ENCODE measurements at regions of chr1 and their contacts with region 1.

Region 1: GRCh38 chr1:163174524-163175437 is 27.9 kb downstream of the RGS5 start:
- DNase-seq: peak; percentile 73
- H3K4me3 Mint-ChIP-seq: peak overlapping the region; percentile 0
- H3K27ac Mint-ChIP-seq: no peak overlapping the region
- H3K4me1 Mint-ChIP-seq: peaks cover 19% of the 10 kb centered on the region
- H3K27me3 Mint-ChIP-seq: no peaks in the 10 kb centered on the region
- CTCF ChIP-seq: peak; percentile 95

Region 2: GRCh38 chr1:162878000-162878596 is 296.7 kb before region 1 on chr1:
- CTCF ChIA-PET with region 1: interaction called, 75 read pairs
- POLR2A ChIA-PET with region 1: no interaction called
- intact Hi-C with region 1: loop called (anchors 1 kb)
- DNase-seq: peak; percentile 87
- H3K4me3 Mint-ChIP-seq: no peak overlapping the region
- H3K27ac Mint-ChIP-seq: no peak overlapping the region
- H3K4me1 Mint-ChIP-seq: no peaks in the 10 kb centered on the region
- H3K27me3 Mint-ChIP-seq: peaks cover 26% of the 10 kb centered on the region
- CTCF ChIP-seq: peak; percentile 95

Region 3: DNA sequence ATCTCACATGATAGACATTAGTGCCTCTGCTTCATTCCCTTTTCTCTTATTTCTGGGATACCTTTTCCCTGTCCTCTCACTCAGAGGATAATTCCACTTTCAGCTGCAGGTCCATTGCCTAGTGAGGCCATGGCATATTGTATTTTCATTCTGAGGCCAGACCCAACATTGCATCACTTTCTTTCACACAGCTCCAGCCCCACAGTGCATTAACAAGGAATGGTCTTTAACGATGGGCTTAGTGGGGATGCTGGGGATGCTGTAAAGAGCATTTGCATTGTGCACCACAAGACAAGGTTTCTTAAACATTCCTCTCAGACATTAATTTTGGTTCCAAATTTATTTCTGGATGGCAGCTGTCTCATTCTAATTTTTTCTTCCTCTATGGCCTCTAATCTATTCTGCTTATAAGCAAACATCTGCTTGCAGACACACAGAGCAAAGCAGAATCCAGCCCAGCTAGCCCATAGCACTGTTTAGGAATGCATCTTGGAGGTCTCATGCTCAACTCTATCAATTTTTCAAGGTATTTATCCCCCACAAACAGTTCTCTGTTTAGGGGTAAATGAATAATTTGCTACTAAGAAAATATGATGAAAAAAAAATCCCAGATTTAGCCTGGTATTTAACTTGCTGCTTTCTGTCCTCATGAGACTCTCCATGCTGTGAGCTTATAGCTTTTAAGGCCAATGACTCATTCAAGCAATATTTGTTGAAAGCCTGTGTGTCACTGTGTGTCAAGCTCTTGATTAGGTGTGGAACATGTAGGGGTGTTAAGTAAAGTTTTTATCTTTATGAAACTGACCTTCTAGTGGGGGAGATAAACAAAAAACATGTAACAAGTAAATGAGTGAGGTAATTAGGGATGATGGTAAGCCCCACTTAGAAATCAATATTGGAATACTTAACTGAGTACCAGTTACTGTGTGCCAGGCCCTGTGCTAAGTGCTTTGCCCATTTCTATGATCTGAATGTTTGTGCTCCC is 269.3 kb before region 1 on chr1:
- CTCF ChIA-PET with region 1: interaction called, 11 read pairs
- POLR2A ChIA-PET with region 1: interaction called, 4 read pairs
- intact Hi-C with region 1: no loop called
- DNase-seq: peak; percentile 78
- H3K4me3 Mint-ChIP-seq: no peak overlapping the region
- H3K27ac Mint-ChIP-seq: peak overlapping the region; percentile 14
- H3K4me1 Mint-ChIP-seq: peaks cover 26% of the 10 kb centered on the region
- H3K27me3 Mint-ChIP-seq: no peaks in the 10 kb centered on the region
- CTCF ChIP-seq: no peak

Region 4: DNA sequence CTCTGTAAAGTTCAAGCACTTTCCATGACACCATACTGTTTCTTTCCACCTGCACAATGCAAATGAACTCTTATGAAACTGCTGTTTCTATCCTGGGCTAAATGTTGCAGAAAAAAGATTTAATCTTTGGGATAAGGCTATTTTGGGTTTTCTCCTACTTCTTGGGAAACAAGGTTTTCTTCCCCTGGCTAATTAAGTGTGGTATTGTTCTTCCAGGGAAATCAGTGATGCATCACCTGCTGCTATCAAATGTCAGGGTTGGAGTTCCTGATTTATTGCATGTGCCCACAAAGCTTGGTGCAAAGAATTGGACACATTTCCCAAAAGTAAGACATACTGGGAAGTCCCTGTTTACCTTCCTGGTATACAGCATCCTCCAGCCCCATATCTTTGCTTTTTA is 111.6 kb before region 1 on chr1:
- CTCF ChIA-PET with region 1: interaction called, 148 read pairs
- POLR2A ChIA-PET with region 1: no interaction called
- intact Hi-C with region 1: no loop called
- DNase-seq: no peak
- H3K4me3 Mint-ChIP-seq: no peak overlapping the region
- H3K27ac Mint-ChIP-seq: no peak overlapping the region
- H3K4me1 Mint-ChIP-seq: no peaks in the 10 kb centered on the region
- H3K27me3 Mint-ChIP-seq: peaks cover 47% of the 10 kb centered on the region
- CTCF ChIP-seq: no peak

Region 5: DNA sequence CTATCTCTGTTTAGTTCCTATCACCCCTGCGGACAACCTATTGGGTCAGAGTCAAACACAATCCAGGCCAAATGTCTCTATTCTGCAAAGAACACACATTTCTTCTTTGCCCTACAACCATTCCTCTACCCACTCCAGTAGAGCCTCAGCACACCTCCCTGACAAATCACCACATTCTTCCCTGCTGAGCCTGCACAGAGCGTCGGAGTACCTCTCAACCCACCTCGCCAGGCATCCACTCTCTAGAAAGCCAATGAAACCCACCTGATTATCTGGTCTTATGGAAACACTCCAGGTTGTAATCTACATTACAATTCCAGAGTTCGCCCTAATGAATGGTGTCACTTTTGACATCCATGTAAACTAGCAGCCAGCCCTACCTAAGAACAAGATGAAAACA is 19.2 kb before region 1 on chr1:
- CTCF ChIA-PET with region 1: interaction called, 14 read pairs
- POLR2A ChIA-PET with region 1: no interaction called
- intact Hi-C with region 1: no loop called
- DNase-seq: no peak
- H3K4me3 Mint-ChIP-seq: no peak overlapping the region
- H3K27ac Mint-ChIP-seq: no peak overlapping the region
- H3K4me1 Mint-ChIP-seq: no peaks in the 10 kb centered on the region
- H3K27me3 Mint-ChIP-seq: no peaks in the 10 kb centered on the region
- CTCF ChIP-seq: no peak

Region 6: GRCh38 chr1:163290025-163290640 is 115.4 kb after region 1 on chr1:
- CTCF ChIA-PET with region 1: interaction called, 10 read pairs
- POLR2A ChIA-PET with region 1: no interaction called
- intact Hi-C with region 1: no loop called
- DNase-seq: peak; percentile 91
- H3K4me3 Mint-ChIP-seq: no peak overlapping the region
- H3K27ac Mint-ChIP-seq: peak overlapping the region; percentile 8
- H3K4me1 Mint-ChIP-seq: peaks cover 6% of the 10 kb centered on the region
- H3K27me3 Mint-ChIP-seq: no peaks in the 10 kb centered on the region
- CTCF ChIP-seq: no peak

Region 7: GRCh38 chr1:163471779-163472650 is 297.2 kb after region 1 on chr1:
- CTCF ChIA-PET with region 1: no interaction called
- POLR2A ChIA-PET with region 1: no interaction called
- intact Hi-C with region 1: no loop called
- DNase-seq: no peak
- H3K4me3 Mint-ChIP-seq: no peak overlapping the region
- H3K27ac Mint-ChIP-seq: no peak overlapping the region
- H3K4me1 Mint-ChIP-seq: no peaks in the 10 kb centered on the region
- H3K27me3 Mint-ChIP-seq: no peaks in the 10 kb centered on the region
- CTCF ChIP-seq: no peak

Measured in MCF 10A (cell line).